OCI-LY7 (cell line): ENCODE measurements at regions of chr12 and their contacts with region 1.

Region 1: DNA sequence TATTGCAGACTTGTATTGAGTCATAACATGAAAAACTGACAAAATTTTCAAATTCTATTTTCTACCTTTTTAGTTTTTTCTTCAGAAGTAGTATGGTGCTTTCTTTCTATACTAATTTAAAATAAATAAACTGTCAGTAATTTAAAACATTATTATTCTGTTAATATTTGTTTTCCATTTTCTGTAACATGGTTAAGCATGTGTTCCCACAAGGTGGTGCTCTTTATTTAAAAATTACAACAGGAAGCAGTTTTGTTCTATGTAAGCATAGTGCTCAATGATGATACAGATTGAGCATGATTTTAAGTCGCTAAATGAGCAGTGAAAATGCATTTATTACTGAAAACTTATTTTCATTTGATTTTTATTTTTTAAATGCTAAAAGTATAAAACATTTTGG is 114.6 kb downstream of the PPFIA2 start:
- DNase-seq: peak; percentile 37
- H3K4me3 ChIP-seq: no peak overlapping the region
- H3K27ac ChIP-seq: no peak overlapping the region
- H3K4me1 ChIP-seq: no peaks in the 10 kb centered on the region
- CTCF ChIP-seq: peak; percentile 77

Region 2: DNA sequence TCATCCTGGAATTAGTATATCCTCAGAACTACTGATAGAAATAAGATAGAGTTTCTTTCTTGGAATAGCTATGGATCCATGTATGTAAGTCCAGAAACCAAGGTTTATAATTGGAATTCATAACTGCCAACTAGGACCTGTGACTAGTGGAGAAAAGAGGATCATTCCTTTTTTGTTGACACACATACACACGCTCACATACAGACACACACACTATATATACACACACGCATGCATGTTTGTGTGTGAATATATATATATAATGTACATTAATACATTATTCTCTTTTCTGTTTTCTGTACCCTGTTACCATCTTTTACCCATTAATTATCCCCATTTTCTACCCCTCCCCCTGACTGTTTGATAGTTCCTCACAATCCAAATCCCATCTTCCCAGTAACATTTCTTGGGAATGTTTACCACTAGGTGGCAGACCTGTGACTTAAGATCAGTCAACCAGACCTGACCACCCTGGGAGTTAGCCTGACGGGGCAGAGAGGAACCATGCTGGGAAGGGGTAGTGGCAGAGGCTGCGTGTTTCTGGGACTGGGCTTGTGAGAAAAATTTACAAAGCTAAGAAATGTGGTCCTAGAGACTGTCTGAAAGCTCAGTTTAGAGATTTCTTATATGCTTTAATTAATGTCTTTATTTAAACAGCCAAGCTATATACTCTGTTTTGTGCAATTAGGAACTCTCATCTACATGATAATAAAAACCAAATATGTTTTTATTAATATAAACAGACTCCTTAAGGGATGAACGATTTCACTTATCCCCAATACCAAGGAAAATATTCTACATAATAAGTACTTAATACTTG is 193.4 kb before region 1 on chr12:
- CTCF ChIA-PET with region 1: no interaction called
- POLR2A ChIA-PET with region 1: no interaction called
- intact Hi-C with region 1: no loop called
- DNase-seq: peak; percentile 45
- H3K4me3 ChIP-seq: no peak overlapping the region
- H3K27ac ChIP-seq: no peak overlapping the region
- H3K4me1 ChIP-seq: no peaks in the 10 kb centered on the region
- CTCF ChIP-seq: peak; percentile 80

Region 3: DNA sequence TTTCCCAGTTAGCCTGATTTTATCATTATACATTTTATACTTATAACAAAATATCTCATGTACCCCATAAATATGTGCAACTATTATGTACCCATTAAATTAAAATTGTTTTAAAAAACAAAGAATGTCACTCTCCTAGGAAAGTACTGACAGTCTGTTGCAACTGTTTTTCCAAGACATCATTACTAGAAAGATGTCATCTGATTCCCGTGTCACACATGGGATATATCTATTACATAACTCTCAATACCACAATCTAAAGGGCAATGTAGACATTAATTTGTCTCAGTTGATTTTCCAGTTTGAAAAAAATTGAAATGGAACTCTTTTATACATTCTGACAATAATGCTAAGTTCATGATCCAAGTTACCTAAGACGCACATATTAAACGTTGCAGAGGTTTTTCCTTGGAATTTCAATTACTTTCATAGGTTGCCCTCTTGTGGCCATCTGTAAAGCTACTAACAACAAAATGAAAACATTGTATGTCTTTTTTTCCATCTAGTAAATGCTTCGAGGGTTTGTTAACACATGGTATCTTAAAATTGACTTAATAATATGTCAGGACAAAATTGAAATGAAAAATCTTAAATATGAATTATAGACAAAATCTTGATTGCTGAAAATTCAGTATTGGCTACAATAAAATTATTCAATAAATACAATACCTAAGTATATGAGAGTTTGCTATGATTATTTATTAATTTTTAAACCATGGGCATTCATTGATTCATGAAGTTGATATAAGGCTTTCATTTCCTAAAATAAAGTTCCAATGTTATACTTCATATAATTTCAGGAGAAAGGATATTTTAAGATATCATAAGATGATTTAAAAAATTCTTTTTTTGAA is 16.9 kb before region 1 on chr12:
- CTCF ChIA-PET with region 1: no interaction called
- POLR2A ChIA-PET with region 1: no interaction called
- intact Hi-C with region 1: no loop called
- DNase-seq: peak; percentile 34
- H3K4me3 ChIP-seq: no peak overlapping the region
- H3K27ac ChIP-seq: no peak overlapping the region
- H3K4me1 ChIP-seq: no peaks in the 10 kb centered on the region
- CTCF ChIP-seq: peak; percentile 89

Region 4: DNA sequence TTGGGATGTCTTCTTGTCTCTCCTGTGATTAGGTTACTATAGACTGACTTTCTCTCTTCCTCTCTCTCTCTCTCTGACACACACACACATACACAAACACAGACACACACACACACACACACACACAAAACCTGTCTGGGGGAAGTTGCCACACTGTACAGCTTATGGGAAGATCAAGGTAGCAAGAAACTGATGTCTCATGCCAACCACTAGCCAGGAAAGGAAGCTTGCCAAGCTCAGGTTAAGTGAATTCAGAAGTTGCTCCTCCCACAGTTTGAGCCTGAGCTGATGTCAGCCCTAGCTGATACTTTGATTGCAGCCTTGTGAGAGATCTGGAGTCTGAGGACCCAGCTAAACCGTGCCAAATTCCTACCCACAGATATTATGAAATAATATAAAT is 47.5 kb after region 1 on chr12:
- CTCF ChIA-PET with region 1: no interaction called
- POLR2A ChIA-PET with region 1: no interaction called
- intact Hi-C with region 1: no loop called
- DNase-seq: no peak
- H3K4me3 ChIP-seq: no peak overlapping the region
- H3K27ac ChIP-seq: no peak overlapping the region
- H3K4me1 ChIP-seq: no peaks in the 10 kb centered on the region
- CTCF ChIP-seq: no peak

Region 5: DNA sequence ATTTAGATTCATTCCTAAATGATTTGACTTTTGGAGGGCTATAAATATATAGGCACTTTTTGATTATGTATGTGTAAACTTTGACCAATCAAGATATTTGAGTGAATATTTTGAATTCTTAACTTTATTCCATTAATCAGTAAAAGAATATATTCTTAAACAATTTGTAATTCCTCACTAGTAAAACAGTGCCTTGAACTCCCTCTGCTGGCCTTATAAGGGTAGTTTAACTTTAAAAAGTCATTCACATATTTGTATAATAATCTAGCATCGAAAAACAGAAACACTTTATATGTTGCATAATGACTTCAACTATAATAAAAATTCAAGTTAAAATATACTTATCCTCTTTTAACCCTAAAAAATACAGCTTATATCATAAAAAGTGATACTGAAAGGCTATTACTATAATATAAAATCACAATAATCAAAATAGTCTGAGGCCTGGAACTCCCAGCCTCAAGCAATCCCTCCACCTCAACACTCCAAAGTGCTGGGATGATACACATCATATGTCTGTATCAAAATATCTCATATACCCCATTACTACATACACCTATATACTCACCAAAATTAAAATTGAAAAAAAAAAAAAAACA is 682.5 kb after region 1 on chr12:
- CTCF ChIA-PET with region 1: no interaction called
- POLR2A ChIA-PET with region 1: no interaction called
- intact Hi-C with region 1: loop called (anchors 2 kb)
- DNase-seq: peak; percentile 18
- H3K4me3 ChIP-seq: no peak overlapping the region
- H3K27ac ChIP-seq: no peak overlapping the region
- H3K4me1 ChIP-seq: no peaks in the 10 kb centered on the region
- CTCF ChIP-seq: peak; percentile 80